PC-3 (cell line): ENCODE measurements at regions of chrX and their contacts with region 1.

Region 1: DNA sequence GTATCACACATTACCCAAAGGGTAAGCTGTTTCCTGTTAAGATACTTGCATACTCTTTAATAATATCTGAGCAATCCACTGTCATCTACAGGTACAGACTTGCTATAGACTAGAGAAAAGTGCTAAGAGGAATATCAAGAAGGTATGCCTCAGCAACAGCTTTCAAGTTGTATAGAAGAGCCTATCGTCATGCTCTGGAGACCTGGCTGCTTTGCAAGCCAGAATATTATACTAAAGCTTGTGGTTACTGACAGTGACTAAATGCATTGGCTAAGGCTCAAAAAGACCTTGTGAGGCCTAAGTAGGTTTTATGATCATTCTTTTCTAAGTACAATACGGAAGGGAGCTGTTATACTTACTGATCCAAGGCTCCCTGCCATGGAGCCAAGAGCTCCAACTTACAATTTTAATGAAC is 11.3 kb downstream of the LAMP2 start:
- DNase-seq: peak; percentile 90
- ATAC-seq: peak; percentile 88
- H3K4me3 ChIP-seq: peak overlapping the region; percentile 42; the same call in 1 of the 2 replicates
- H3K27ac ChIP-seq: peak overlapping the region; percentile 69
- H3K4me1 ChIP-seq: peaks cover 43% of the 10 kb centered on the region
- H3K27me3 ChIP-seq: no peaks in the 10 kb centered on the region
- CTCF ChIP-seq: no peak

Region 2: DNA sequence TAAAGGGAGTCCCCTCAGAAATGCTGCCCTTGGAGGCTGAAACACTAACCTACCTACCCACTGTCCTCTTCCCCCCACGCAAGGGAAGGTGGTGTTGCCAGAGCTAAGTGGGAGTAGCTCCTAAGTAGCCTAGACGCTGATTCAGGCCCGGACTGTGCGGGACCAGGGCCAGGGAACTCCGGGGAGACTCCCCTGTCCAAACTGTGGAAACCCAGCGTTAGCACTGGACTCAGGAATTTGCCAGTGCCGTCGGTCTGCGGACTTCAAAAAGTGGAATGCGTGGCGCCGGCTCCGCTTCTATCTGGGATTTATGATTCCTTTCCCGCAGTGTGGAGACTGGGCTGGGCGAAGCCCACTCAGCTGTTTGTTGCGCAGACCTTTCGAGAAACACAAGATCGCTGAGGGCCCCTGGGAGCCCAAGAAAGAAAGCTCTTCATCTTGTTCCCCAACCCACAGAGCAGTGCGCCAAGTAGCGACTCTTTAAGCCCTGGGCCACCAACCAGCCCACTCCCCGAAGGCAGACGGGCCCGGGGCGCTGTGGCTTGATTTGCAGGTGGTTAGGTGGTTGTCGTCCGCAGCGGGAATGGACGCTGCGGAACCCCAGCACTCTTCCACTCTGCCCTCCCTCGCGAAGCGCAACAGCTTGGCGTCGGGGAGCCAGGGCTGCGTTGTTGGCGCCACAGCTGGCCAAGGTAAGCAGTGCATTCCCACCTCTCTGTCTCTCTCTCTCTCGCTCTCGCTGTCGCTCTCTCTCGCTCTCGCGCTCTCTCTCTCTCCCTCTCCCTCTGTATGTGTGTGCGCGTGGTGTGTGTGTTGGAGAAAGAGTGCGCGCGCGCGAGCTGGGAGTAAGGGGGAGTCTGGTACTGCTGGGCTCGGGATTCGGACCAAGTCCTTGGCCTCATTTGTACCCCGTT is 148.6 kb before region 1 on chrX:
- CTCF ChIA-PET with region 1: no interaction called
- POLR2A ChIA-PET with region 1: no interaction called
- intact Hi-C with region 1: loop called (anchors 10 kb)
- DNase-seq: peak; percentile 77
- ATAC-seq: peak; percentile 86
- H3K4me3 ChIP-seq: peak overlapping the region; percentile 71
- H3K27ac ChIP-seq: no peak overlapping the region
- H3K4me1 ChIP-seq: peaks cover 19% of the 10 kb centered on the region
- H3K27me3 ChIP-seq: no peaks in the 10 kb centered on the region
- CTCF ChIP-seq: peak; percentile 57

Region 3: DNA sequence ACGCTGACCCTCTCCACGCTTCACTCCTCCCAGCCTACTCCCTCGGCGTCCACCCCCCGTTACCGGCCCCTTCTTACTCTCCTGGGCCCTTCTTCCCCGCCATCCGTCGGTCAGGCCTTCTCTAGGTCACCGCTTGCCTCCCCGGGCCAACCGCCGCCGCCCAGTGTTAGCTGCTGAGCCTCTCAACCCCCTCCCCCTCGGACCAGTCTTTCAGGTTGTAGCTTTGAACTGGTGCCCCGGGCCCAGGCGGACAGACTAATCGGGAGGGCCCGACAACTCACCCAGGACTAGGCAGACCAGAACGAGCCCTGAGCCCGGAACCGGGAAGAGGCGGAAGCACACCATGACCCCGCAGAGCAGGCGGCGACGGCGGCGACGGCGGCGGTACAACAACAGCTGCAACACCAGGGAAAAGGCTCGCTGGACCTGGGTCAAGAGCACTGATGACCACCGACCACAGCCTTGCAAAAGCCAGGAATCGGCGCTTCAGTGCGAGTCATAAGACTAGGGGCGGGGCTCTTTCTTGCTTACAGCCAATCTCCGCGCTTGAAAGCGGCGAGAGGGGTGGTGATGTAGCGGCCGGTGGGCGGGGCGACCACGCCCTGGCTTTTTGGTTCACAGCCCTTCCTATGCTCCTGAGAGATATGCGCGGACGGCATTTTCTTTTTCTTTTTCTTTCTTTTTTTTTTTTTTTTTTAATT is 11.2 kb after region 1 on chrX and contains the start of gene LAMP2:
- CTCF ChIA-PET with region 1: interaction called, 3 read pairs
- POLR2A ChIA-PET with region 1: no interaction called
- intact Hi-C with region 1: loop called (anchors 1 kb)
- DNase-seq: peak; percentile 89
- ATAC-seq: peak; percentile 90
- H3K4me3 ChIP-seq: peak within 1 kb of the TSS; percentile 87
- H3K27ac ChIP-seq: peak within 1 kb of the TSS; percentile 70
- H3K4me1 ChIP-seq: peaks cover 12% of the 10 kb centered on the region; the same call in 1 of the 2 replicates
- H3K27me3 ChIP-seq: no peaks in the 10 kb centered on the region
- CTCF ChIP-seq: no peak
- total RNA-seq, gene LAMP2: 51.5 and 53.8 TPM in 2 replicates

Region 4: GRCh38 chrX:120629667-120630537 is 172.1 kb after region 1 on chrX and contains the start of gene C1GALT1C1:
- CTCF ChIA-PET with region 1: no interaction called
- POLR2A ChIA-PET with region 1: no interaction called
- intact Hi-C with region 1: no loop called
- DNase-seq: peak; percentile 94
- ATAC-seq: peak; percentile 98
- H3K4me3 ChIP-seq: peak within 1 kb of the TSS; percentile 86
- H3K27ac ChIP-seq: peak within 1 kb of the TSS; percentile 47
- H3K4me1 ChIP-seq: peaks cover 12% of the 10 kb centered on the region
- H3K27me3 ChIP-seq: no peaks in the 10 kb centered on the region
- CTCF ChIP-seq: no peak; the same call in 1 of the 2 replicates
- total RNA-seq, gene C1GALT1C1: 33.3 and 37.2 TPM in 2 replicates

Region 5: GRCh38 chrX:120736989-120737388 is 279.2 kb after region 1 on chrX:
- CTCF ChIA-PET with region 1: no interaction called
- POLR2A ChIA-PET with region 1: no interaction called
- intact Hi-C with region 1: no loop called
- DNase-seq: peak; percentile 82
- ATAC-seq: peak; percentile 18
- H3K4me3 ChIP-seq: no peak overlapping the region
- H3K27ac ChIP-seq: peak overlapping the region; percentile 99
- H3K4me1 ChIP-seq: peaks cover 76% of the 10 kb centered on the region
- H3K27me3 ChIP-seq: no peaks in the 10 kb centered on the region
- CTCF ChIP-seq: no peak